ENCODE measurements at regions of chr13 and their contacts with region 1.

Region 1: GRCh38 chr13:67230404-67231288 is 510 bp upstream of the PCDH9 start:
- DNase-seq: peak; percentile 97
- H3K4me3 ChIP-seq: peak overlapping the region; percentile 72 to 89 (median 84)
- H3K27ac ChIP-seq: peak overlapping the region; percentile 87 to 94 (median 89)
- H3K4me1 ChIP-seq: peaks cover 0 to 15% (median 9%) of the 10 kb centered on the region in 4 donors
- H3K27me3 ChIP-seq: no peaks in the 10 kb centered on the region
- CTCF ChIP-seq: no peak
- EP300 ChIP-seq: peak in 1 of 4 donors; percentile 23
- POLR2A ChIP-seq: no peak

Region 2: DNA sequence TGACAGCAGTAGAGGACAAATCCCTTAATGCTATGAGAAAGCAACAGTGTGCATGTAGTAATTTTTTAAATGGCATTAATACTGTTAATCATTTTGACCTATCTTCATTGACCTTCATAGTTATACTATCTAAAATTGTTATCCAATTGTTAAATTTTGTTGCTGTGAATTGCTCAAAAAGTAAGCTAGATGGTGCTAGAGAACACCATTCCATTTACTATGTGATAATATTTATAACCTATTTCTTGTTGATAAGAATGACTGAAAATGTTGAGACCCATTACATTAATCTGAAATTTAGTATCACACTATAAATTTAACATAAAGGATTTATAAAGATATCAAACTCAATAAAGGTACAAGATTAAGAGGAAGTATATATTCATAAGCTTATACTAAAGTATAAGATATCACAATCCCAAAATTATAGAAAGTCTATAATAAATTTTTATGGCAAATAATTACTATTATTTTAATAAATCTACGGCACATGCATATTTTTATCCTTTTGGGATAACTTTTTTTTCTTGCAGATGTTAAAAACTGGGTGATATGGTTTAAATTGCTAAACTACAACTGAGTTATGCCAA is 1573.8 kb before region 1 on chr13:
- intact Hi-C with region 1: loop called (anchors 5 kb)
- DNase-seq: no peak
- H3K4me3 ChIP-seq: no peak overlapping the region
- H3K27ac ChIP-seq: no peak overlapping the region
- H3K4me1 ChIP-seq: no peaks in the 10 kb centered on the region
- H3K27me3 ChIP-seq: no peaks in the 10 kb centered on the region
- CTCF ChIP-seq: peak in 3 of 4 experiments; percentile 16 to 56 (median 31)
- EP300 ChIP-seq: no peak
- POLR2A ChIP-seq: no peak

Region 3: GRCh38 chr13:65943024-65943423 is 1287.6 kb before region 1 on chr13:
- intact Hi-C with region 1: loop called (anchors 5 kb)
- DNase-seq: no peak
- H3K4me3 ChIP-seq: no peak overlapping the region
- H3K27ac ChIP-seq: peak overlapping the region in 3 of 4 donors; percentile 21 to 59 (median 38)
- H3K4me1 ChIP-seq: peaks cover 0 to 49% (median 8%) of the 10 kb centered on the region in 4 donors
- H3K27me3 ChIP-seq: no peaks in the 10 kb centered on the region
- CTCF ChIP-seq: no peak
- EP300 ChIP-seq: peak in 3 of 4 donors; percentile 25 to 74 (median 56)
- POLR2A ChIP-seq: no peak

Region 4: DNA sequence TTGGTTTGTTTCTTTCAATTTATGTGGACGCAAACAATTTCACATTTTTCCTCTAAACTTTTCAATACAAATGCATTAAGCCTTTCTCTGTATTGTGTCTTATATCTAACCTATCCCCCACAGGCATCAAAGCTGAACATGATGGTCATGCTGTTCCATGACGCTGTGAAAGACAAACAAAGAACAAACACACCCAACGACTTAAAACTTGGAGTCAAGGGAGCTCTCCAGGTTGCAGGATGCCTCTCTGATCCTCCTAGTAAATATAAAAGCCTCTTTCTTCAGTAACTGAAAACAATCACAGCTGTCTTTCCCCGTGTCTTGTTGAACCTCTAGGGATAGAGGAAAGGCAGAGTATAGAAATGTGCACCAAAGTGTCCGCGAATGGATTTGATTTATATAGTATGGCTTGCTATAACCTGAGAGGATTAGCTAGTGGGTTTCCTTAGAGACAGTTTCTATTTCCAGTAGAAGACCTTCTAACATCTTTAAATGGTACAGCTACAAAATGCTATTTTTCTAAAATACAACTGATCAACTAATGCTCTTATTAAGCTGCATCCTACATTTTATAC is 43.6 kb before region 1 on chr13:
- intact Hi-C with region 1: no loop called
- DNase-seq: no peak
- H3K4me3 ChIP-seq: no peak overlapping the region
- H3K27ac ChIP-seq: no peak overlapping the region
- H3K4me1 ChIP-seq: no peaks in the 10 kb centered on the region
- H3K27me3 ChIP-seq: no peaks in the 10 kb centered on the region
- CTCF ChIP-seq: no peak
- EP300 ChIP-seq: no peak
- POLR2A ChIP-seq: no peak

Measured in sigmoid colon (tissue), 7 donors.